IMR-90 (cell line): ENCODE measurements at regions of chr2 and their contacts with region 1.

Region 1: DNA sequence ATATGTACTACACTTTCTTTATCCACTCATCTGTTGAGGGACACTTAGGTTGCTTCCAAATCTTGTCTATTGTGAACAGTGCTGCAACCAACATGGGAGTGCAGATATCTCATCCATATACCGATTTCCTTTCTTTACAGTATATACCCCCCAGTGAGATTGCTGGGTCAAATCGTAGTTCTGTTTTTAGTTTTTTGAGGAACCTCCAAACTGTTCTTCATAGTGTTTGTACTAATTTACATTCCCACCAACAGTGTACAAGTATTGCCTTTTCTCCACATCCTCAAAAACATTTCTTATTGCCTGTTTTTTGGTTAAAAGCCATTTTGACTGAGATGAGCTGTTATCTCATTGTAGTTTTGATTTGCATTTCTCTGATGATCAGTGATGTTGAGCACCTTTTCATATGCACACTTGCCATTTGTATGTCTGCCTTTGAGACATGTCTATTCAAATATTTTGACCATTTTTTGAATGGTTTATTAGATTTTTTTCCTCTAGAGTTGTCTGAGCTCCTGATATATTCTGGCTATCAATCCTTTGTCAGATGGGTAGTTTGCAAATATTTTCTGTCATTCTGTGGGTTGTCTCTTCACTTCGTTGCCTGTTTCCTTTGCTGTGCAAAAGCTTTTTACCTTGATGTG is 12.2 kb downstream of the PLEK start:
- DNase-seq: no peak
- ATAC-seq: no peak
- H3K4me3 ChIP-seq: no peak overlapping the region
- H3K27ac ChIP-seq: no peak overlapping the region
- H3K4me1 ChIP-seq: no peaks in the 10 kb centered on the region
- H3K27me3 ChIP-seq: peaks cover 43% of the 10 kb centered on the region
- CTCF ChIP-seq: no peak
- POLR2A ChIP-seq: no peak
- RAD21 ChIP-seq: no peak

Region 2: GRCh38 chr2:68403199-68403644 is 26.0 kb after region 1 on chr2:
- CTCF ChIA-PET with region 1: interaction called, 3 read pairs
- POLR2A ChIA-PET with region 1: no interaction called
- dilution Hi-C with region 1: no loop called
- in situ Hi-C with region 1: no loop called
- intact Hi-C with region 1: loop called (anchors 2 kb)
- DNase-seq: no peak
- ATAC-seq: no peak
- H3K4me3 ChIP-seq: no peak overlapping the region
- H3K27ac ChIP-seq: no peak overlapping the region
- H3K4me1 ChIP-seq: no peaks in the 10 kb centered on the region
- H3K27me3 ChIP-seq: peaks cover 23% of the 10 kb centered on the region
- CTCF ChIP-seq: no peak
- POLR2A ChIP-seq: no peak
- RAD21 ChIP-seq: no peak

Region 3: DNA sequence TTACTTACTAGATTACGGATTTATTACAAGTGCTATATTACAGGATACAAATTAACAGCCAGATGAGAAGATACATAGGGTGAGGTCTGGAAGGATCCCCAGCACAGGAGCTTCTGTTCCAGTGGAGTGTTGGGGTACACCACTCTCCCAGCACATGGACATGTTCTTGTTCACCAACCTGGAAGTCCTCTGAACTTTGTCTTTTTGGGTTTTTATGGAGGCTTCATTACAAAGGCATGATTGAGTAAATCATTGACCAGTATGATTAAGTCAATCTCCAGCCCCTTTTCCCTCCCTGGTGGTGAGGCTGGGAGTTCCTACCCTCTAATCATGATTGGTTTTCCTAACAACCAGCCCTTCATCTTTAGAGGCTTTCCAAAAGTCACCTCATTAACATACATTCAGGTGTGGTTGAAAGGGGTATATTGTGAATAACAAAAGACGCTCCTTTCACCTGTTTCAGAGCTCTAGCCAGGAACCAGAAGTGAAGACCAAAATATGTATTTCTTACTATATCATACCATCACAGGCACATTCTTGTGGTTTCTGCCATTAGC is 128.4 kb after region 1 on chr2:
- CTCF ChIA-PET with region 1: no interaction called
- POLR2A ChIA-PET with region 1: no interaction called
- dilution Hi-C with region 1: no loop called
- in situ Hi-C with region 1: no loop called
- intact Hi-C with region 1: no loop called
- DNase-seq: no peak
- ATAC-seq: no peak
- H3K4me3 ChIP-seq: no peak overlapping the region
- H3K27ac ChIP-seq: no peak overlapping the region
- H3K4me1 ChIP-seq: no peaks in the 10 kb centered on the region
- H3K27me3 ChIP-seq: no peaks in the 10 kb centered on the region
- CTCF ChIP-seq: no peak
- POLR2A ChIP-seq: no peak
- RAD21 ChIP-seq: no peak

Region 4: GRCh38 chr2:68824831-68825230 is 447.6 kb after region 1 on chr2:
- CTCF ChIA-PET with region 1: no interaction called
- POLR2A ChIA-PET with region 1: no interaction called
- dilution Hi-C with region 1: no loop called
- in situ Hi-C with region 1: no loop called
- intact Hi-C with region 1: no loop called
- DNase-seq: peak; percentile 71
- ATAC-seq: peak; percentile 24; the same call in 1 of the 2 replicates
- H3K4me3 ChIP-seq: no peak overlapping the region
- H3K27ac ChIP-seq: peak overlapping the region; percentile 6
- H3K4me1 ChIP-seq: peaks cover 24% of the 10 kb centered on the region
- H3K27me3 ChIP-seq: no peaks in the 10 kb centered on the region
- CTCF ChIP-seq: no peak
- POLR2A ChIP-seq: no peak
- RAD21 ChIP-seq: no peak